ENCODE measurements at regions of chr19 and their contacts with region 1.

Region 1: DNA sequence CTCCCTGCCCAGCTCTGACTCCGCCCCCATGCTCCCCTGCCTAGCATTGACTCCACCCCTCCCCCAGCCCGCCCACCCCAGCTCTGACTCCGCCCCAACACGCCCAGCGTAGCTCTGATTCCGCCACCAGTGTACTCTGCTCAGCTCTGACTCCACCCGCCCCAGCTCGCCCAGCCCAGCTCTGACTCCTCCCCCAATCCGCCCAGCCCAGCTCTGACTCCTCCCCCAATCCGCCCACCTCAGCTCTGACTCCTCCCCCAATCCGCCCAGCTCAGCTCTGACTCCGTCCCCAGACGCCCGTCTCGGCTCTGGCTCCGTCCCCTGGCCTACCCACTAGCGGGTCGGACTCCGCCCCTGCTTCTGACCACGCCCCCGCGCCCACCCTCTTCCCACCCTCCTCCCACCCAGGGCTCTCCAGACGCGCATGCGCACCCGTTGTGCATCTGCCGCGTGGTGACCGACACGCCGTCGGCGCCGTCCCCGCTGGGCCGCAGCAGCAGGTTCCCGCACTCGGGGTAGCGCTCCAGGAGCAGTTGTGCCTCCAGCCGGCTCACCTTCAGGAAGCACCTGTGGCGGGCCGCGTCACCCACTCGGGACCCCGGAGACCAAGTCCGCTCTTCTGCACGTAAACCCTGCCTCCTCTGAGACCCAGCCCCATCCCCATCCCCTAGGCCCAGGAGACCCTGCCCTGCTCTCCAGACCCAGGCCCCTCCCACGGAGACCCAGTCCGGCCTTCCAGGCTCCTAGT is 10.2 kb downstream of the STAP2 start:
- DNase-seq: peak; percentile 74
- ATAC-seq: peak; percentile 90
- H3K4me3 ChIP-seq: peak overlapping the region; percentile 38
- H3K27ac ChIP-seq: no peak overlapping the region
- H3K4me1 ChIP-seq: no peaks in the 10 kb centered on the region
- H3K27me3 ChIP-seq: no peaks in the 10 kb centered on the region; the same call in 1 of the 2 replicates
- CTCF ChIP-seq: 0 out of 2 replicates have a peak, but pooled peaks have one; percentile 31
- POLR2A ChIP-seq: no peak
- RAD21 ChIP-seq: no peak

Region 2: DNA sequence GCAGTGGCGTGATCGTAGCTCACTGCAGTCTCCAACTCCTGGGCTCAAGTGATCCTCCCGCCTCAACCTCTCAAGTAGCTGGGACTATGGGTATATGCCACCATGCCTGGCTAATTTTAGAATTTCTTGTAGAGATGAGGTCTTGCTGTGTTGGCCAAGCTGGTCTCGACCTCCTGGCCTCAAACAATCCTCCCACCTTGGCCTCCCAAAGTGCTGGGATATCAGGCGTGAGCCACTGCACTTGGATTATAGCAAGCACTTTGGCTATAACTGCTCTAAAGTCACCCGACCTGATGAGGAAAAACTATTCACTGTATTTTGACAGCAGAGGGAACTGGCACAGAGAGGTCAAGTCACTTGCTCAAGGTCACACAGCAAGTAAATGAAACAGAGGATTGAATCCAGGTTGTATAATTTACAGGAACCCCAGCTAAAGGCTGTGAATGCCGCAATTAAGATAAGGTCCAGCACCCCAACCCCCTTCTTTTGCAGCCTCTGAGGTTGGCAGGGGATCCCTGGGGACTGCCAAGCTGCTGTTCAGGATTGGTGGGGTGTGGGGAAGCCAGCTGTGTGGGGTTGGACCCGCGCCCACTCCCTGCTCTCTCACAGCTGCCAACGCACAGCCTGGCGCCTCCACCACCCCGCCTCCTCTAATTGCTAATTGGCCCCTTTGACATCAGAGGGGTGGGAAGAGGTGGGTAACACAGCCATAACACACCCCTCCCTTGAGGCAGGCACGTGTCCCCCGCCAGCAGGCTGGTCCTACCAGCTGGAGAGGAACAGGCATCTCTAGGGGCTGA is 32.2 kb before region 1 on chr19:
- CTCF ChIA-PET with region 1: no interaction called
- POLR2A ChIA-PET with region 1: interaction called, 10 read pairs
- dilution Hi-C with region 1: no loop called
- in situ Hi-C with region 1: no loop called
- intact Hi-C with region 1: no loop called
- DNase-seq: no peak
- ATAC-seq: peak; percentile 62
- H3K4me3 ChIP-seq: no peak overlapping the region
- H3K27ac ChIP-seq: no peak overlapping the region
- H3K4me1 ChIP-seq: peaks cover 3% of the 10 kb centered on the region; the same call in 1 of the 2 replicates
- H3K27me3 ChIP-seq: peaks cover 12% of the 10 kb centered on the region
- CTCF ChIP-seq: no peak
- POLR2A ChIP-seq: no peak
- RAD21 ChIP-seq: no peak

Region 3: DNA sequence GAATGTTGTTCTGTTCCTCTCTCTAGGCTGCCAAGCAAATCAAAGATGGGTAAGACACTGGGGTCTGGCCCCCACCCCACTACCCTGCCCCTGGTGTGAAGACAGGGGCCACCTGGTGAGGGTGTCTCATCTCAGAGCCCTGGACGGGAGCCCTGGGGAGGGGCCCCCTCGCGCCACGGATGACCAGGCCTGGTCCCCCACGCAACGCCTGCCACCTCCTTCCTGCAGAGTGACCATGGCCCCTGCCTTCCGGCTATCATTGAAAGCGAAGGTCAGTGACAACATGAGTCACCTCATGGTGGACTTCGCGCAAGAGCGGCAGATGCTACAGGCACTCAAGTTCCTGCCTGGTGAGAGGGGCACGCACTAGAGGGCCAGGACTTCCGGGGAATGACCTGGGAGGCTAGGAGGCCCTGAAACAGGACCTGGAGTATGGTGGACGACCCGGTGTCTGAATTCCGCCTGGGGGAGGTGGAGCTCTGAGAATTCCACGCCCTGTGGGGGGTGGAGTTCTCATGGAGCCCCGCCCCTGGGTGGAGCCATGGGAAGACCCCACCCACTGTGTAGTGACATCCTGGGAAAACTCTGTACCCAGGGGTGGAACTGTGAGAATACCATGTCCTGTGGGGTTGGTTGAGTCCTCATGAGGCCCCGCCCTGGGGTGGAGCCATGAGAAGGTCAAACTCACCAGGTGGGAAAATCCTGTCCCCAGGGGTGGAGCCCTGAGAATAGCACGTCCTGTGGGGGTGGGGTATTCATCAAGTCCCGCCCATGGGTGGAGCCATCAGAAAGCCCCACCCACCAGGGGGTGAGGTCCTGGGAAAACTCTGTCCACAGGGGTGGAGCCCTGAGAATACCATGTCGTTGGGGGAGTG is 17.9 kb before region 1 on chr19:
- CTCF ChIA-PET with region 1: no interaction called
- POLR2A ChIA-PET with region 1: no interaction called
- dilution Hi-C with region 1: no loop called
- in situ Hi-C with region 1: no loop called
- intact Hi-C with region 1: no loop called
- DNase-seq: no peak
- ATAC-seq: no peak
- H3K4me3 ChIP-seq: no peak overlapping the region
- H3K27ac ChIP-seq: no peak overlapping the region
- H3K4me1 ChIP-seq: no peaks in the 10 kb centered on the region
- H3K27me3 ChIP-seq: no peaks in the 10 kb centered on the region
- CTCF ChIP-seq: no peak
- POLR2A ChIP-seq: no peak
- RAD21 ChIP-seq: no peak

Region 4: GRCh38 chr19:4464815-4465581 is 136.6 kb after region 1 on chr19:
- CTCF ChIA-PET with region 1: no interaction called
- POLR2A ChIA-PET with region 1: no interaction called
- dilution Hi-C with region 1: no loop called
- in situ Hi-C with region 1: no loop called
- intact Hi-C with region 1: no loop called
- DNase-seq: no peak
- ATAC-seq: no peak
- H3K4me3 ChIP-seq: no peak overlapping the region
- H3K27ac ChIP-seq: no peak overlapping the region
- H3K4me1 ChIP-seq: no peaks in the 10 kb centered on the region
- H3K27me3 ChIP-seq: no peaks in the 10 kb centered on the region
- CTCF ChIP-seq: no peak
- POLR2A ChIP-seq: no peak
- RAD21 ChIP-seq: no peak

Measured in IMR-90 (cell line).